ENCODE measurements at regions of chr13 and their contacts with region 1.

Region 1: DNA sequence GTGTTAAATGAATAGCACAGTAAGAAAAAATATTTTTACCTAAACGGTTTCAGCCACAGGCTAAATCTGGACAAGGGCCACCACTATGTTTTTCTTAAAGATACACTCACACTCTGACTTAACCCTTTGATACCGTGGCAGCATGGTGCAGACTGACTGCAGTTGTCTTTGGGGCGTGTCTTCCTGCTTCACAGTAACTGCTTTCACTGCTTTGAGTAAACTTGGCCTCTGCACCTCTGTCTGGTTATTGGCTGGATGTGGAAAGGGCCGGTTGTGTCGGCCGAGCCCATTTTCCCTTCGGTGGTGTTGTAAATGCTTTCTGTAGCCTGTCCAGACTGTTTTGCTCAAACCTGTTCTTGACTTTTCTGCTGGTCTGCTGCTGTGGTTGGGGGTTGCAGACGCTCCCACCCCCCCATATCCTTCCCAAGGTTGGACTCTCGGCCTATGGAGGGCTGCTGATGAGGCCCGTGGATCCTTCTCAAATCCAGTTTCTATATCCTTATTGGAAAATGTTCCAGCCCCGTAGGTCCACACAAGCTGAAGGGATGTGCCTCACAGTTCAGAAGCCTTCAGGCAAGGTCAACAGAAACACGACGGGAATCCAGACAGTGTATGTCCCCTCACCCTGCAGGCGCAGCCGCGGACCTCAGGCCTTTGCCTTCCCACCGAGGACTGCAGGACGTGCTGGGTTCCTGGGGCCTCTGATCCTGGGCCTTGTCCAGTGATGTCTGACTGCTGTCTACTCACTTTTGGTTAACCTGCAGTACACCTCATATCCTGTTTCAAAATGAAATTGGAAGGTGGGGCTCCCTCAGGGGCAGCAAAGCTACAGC is 90.2 kb upstream of the RNF113B start:
- DNase-seq: peak; percentile 94
- ATAC-seq: peak; percentile 76
- H3K4me3 ChIP-seq: peak overlapping the region; percentile 35 to 65 (median 41)
- H3K27ac ChIP-seq: peak overlapping the region; percentile 80
- H3K4me1 ChIP-seq: peaks cover 98% of the 10 kb centered on the region
- H3K27me3 ChIP-seq: no peaks in the 10 kb centered on the region
- CTCF ChIP-seq: no peak; the same call in 1 of the 2 replicates
- EP300 ChIP-seq: peak in 1 of 2 experiments; percentile 81; a peak in 2 of 4 replicates
- POLR2A ChIP-seq: peak; percentile 66 to 68
- RAD21 ChIP-seq: no peak

Region 2: GRCh38 chr13:98022210-98022609 is 245.1 kb before region 1 on chr13:
- CTCF ChIA-PET with region 1: no interaction called
- POLR2A ChIA-PET with region 1: interaction called, 3 read pairs
- in situ Hi-C with region 1: no loop called
- intact Hi-C with region 1: loop called (anchors 10 kb)
- DNase-seq: peak; percentile 29
- ATAC-seq: no peak
- H3K4me3 ChIP-seq: no peak overlapping the region
- H3K27ac ChIP-seq: no peak overlapping the region
- H3K4me1 ChIP-seq: peaks cover 21% of the 10 kb centered on the region
- H3K27me3 ChIP-seq: no peaks in the 10 kb centered on the region
- CTCF ChIP-seq: no peak
- EP300 ChIP-seq: no peak
- POLR2A ChIP-seq: no peak
- RAD21 ChIP-seq: no peak

Region 3: GRCh38 chr13:98246538-98247172 is 20.6 kb before region 1 on chr13:
- CTCF ChIA-PET with region 1: no interaction called
- POLR2A ChIA-PET with region 1: interaction called, 45 read pairs
- in situ Hi-C with region 1: no loop called
- intact Hi-C with region 1: loop called (anchors 1 kb)
- DNase-seq: peak; percentile 96
- ATAC-seq: peak; percentile 92
- H3K4me3 ChIP-seq: no peak overlapping the region; a peak in 1 of 6 replicates
- H3K27ac ChIP-seq: peak overlapping the region; percentile 87
- H3K4me1 ChIP-seq: peaks cover 100% of the 10 kb centered on the region
- H3K27me3 ChIP-seq: no peaks in the 10 kb centered on the region
- CTCF ChIP-seq: no peak
- EP300 ChIP-seq: peak in 1 of 2 experiments; percentile 82; a peak in 2 of 4 replicates
- POLR2A ChIP-seq: no peak
- RAD21 ChIP-seq: no peak

Region 4: DNA sequence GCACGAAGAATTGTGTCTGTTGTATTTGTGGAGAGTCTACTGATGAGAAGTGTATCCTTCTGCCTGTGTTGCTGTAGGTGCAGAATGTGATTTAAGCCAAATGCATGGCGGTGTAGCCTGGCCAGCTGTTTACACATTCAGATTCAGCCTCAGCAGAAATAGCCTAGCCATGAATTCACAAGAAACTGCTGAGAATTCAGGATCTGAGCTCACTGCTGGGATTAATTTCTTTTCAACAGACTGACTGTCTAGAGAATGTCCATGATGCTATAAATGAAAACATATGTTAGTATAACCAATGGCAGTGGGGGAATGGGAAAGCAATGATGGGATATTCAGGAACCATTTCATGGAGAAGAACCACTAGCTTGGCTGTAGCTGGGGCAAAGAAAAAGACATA is 12.8 kb before region 1 on chr13:
- CTCF ChIA-PET with region 1: no interaction called
- POLR2A ChIA-PET with region 1: interaction called, 45 read pairs
- in situ Hi-C with region 1: no loop called
- intact Hi-C with region 1: no loop called
- DNase-seq: no peak
- ATAC-seq: no peak
- H3K4me3 ChIP-seq: no peak overlapping the region
- H3K27ac ChIP-seq: no peak overlapping the region
- H3K4me1 ChIP-seq: peaks cover 92% of the 10 kb centered on the region
- H3K27me3 ChIP-seq: no peaks in the 10 kb centered on the region
- CTCF ChIP-seq: no peak
- EP300 ChIP-seq: no peak
- POLR2A ChIP-seq: no peak
- RAD21 ChIP-seq: no peak

Region 5: GRCh38 chr13:98300956-98301641 is 33.8 kb after region 1 on chr13:
- CTCF ChIA-PET with region 1: no interaction called
- POLR2A ChIA-PET with region 1: interaction called, 21 read pairs
- in situ Hi-C with region 1: no loop called
- intact Hi-C with region 1: loop called (anchors 2 kb)
- DNase-seq: peak; percentile 96
- ATAC-seq: peak; percentile 90
- H3K4me3 ChIP-seq: peak overlapping the region in 1 of 3 experiments; percentile 30; a peak in 1 of 6 replicates
- H3K27ac ChIP-seq: peak overlapping the region; percentile 80
- H3K4me1 ChIP-seq: peaks cover 97% of the 10 kb centered on the region
- H3K27me3 ChIP-seq: no peaks in the 10 kb centered on the region
- CTCF ChIP-seq: peak; percentile 66
- EP300 ChIP-seq: peak in 1 of 2 experiments; percentile 52; a peak in 2 of 4 replicates
- POLR2A ChIP-seq: no peak
- RAD21 ChIP-seq: no peak